CD8-positive, alpha-beta memory T cell (primary cell): ENCODE measurements at regions of chr6 and their contacts with region 1.

Region 1: DNA sequence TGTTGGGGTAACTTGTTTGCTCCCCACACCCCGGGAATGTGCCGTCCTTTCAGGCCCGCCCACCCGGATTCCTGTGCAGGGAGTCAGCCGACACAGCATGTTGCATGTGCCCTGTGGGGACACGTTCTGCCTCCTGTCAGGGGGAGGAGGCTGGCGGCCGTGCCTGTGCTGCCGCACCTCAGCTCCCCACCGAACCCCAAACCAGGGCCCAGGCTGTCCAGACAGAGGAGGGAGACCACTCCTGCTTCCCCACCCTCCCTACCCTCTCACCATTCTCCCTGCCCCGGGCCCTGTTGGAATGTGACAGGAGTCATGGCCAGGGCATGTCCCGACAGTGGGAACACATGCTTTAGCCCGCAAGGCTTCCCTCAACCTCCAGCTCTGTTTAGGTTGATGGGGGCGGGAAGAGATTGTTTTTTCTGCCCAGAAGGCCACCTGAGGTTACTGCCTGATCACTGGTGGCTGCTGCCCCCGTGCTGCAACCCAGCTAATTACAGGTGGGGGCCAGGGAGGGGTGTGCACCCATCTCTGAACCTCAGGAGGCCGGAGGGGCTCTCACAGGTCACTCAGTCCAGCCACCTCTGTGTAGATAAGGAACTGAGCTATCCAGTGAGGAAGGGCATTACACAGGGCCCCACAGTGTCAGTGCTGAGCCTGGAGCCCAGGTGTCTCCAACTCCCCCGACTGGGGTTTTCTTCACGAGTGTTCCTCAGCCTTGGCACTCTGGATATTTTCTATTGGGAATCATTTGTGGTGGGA is 13.6 kb downstream of the LRRC73 start:
- DNase-seq: no peak
- H3K4me3 ChIP-seq: no peak overlapping the region
- H3K4me3 Mint-ChIP-seq: no peak overlapping the region
- H3K27ac ChIP-seq: no peak overlapping the region
- H3K27ac Mint-ChIP-seq: peak overlapping the region in 5 of 8 donors; percentile 33 to 86 (median 62)
- H3K4me1 ChIP-seq: peaks cover 22% of the 10 kb centered on the region
- H3K4me1 Mint-ChIP-seq: peaks cover 26 to 41% (median 28%) of the 10 kb centered on the region in 3 donors
- H3K27me3 ChIP-seq: no peaks in the 10 kb centered on the region
- H3K27me3 Mint-ChIP-seq: no peaks in the 10 kb centered on the region

Region 2: DNA sequence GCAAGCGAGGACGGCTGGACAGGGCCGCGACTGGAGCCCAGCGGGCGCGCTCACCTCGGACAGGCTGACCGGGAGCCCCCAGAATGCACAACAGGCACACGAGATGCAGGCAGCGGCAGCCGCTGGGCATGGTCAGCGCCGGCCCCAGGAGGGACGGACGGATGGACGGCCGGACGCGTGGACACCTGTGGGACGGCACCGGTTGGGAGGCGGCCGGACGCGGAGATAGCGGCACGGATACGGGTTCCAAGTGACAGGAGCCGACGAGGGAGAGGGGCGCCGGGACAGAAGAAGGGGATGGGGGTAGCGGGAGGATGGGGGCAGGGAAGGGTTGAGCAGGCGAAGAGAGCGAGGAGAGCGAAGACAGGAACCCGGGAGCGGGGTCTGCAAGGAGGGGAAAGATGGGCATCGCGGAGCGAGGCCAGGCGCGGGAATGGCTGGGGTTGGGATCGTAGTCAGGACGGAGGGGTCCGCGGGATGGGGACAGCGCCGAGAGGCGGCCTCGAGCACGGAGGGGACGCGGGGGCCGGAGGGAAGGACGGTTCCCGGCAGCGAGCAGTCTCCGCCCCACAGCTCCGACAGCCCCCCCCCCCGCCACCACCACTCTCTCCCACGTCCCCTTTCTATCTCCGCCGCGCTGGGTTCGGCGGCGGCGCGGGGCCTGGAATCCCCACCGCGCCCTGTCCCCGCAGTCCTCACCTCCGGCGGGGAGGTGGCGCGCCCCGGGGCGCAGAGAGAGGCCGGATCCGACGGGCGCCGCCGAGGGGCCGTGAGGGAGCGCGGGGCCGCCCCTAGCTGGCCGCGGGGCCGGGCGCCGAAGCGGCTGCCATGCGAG is 41.6 kb before region 1 on chr6:
- CTCF ChIA-PET with region 1: interaction called, 13 read pairs
- POLR2A ChIA-PET with region 1: no interaction called
- DNase-seq: peak; percentile 8 to 58 (median 27)
- H3K4me3 ChIP-seq: peak overlapping the region; percentile 74
- H3K4me3 Mint-ChIP-seq: peak overlapping the region; percentile 45 to 92 (median 83)
- H3K27ac ChIP-seq: no peak overlapping the region
- H3K27ac Mint-ChIP-seq: peak overlapping the region in 3 of 8 donors; percentile 32 to 87 (median 87)
- H3K4me1 ChIP-seq: peaks cover 11% of the 10 kb centered on the region
- H3K4me1 Mint-ChIP-seq: peaks cover 11 to 16% (median 14%) of the 10 kb centered on the region in 3 donors
- H3K27me3 ChIP-seq: no peaks in the 10 kb centered on the region
- H3K27me3 Mint-ChIP-seq: peaks cover 0 to 5% of the 10 kb centered on the region in 2 donors

Region 3: DNA sequence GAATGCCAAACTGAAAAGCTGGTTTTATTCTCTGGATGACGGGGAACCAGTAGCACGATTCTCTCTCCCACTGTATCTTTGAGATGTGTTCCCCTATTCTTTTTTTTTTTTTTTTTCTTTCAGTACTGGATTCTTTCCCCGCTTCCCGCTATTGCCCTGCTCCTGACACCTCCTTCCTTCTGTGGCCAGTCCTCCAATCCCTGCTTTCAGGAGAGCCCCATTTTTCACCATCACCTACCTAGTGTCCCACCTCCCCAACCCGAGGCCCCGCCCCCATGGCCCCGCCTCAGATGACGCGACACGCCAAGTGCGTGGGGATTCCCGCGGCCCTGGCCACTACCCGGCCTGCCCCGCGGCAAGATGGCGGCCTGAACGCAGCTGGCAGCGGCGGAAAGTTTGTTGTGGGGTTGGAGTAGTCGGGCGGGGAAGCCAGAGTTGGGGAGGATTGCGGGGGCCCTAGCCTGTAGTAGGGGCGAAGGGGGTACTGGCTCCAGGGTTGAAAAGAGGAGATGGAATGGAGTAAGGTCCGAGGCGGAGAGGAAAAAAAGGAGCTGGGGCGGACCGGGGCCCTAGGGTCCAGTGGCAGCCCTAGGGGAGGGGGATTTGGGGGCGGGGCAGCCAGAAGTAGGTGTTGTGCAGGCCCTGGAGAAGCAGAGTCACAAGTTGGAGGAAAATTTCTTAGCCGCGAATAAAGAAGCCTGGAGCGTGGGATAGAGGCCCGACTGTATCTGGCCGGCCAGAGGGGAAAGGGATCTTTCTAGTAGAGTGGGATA is 19.1 kb before region 1 on chr6 and contains the start of gene TJAP1:
- CTCF ChIA-PET with region 1: interaction called, 10 read pairs
- POLR2A ChIA-PET with region 1: interaction called, 6 read pairs
- DNase-seq: peak; percentile 92 to 97 (median 95)
- H3K4me3 ChIP-seq: peak within 1 kb of the TSS; percentile 65
- H3K4me3 Mint-ChIP-seq: peak within 1 kb of the TSS; percentile 81 to 99 (median 88)
- H3K27ac ChIP-seq: peak within 1 kb of the TSS; percentile 92
- H3K27ac Mint-ChIP-seq: peak within 1 kb of the TSS; percentile 89 to 100 (median 97)
- H3K4me1 ChIP-seq: peaks cover 16% of the 10 kb centered on the region
- H3K4me1 Mint-ChIP-seq: peaks cover 42 to 56% (median 53%) of the 10 kb centered on the region in 3 donors
- H3K27me3 ChIP-seq: no peaks in the 10 kb centered on the region
- H3K27me3 Mint-ChIP-seq: no peaks in the 10 kb centered on the region
- total RNA-seq, gene TJAP1: 48.8 to 49.1 TPM

Region 4: GRCh38 chr6:43506667-43507471 is 10.3 kb after region 1 on chr6:
- CTCF ChIA-PET with region 1: interaction called, 93 read pairs
- POLR2A ChIA-PET with region 1: interaction called, 14 read pairs
- DNase-seq: peak; percentile 65 to 83 (median 71)
- H3K4me3 ChIP-seq: no peak overlapping the region
- H3K4me3 Mint-ChIP-seq: peak overlapping the region in 1 of 7 donors; percentile 66
- H3K27ac ChIP-seq: no peak overlapping the region
- H3K27ac Mint-ChIP-seq: peak overlapping the region in 7 of 8 donors; percentile 5 to 95 (median 66)
- H3K4me1 ChIP-seq: peaks cover 14% of the 10 kb centered on the region
- H3K4me1 Mint-ChIP-seq: peaks cover 16 to 35% (median 30%) of the 10 kb centered on the region in 3 donors
- H3K27me3 ChIP-seq: peaks cover 10% of the 10 kb centered on the region
- H3K27me3 Mint-ChIP-seq: peaks cover 5 to 14% of the 10 kb centered on the region in 2 donors